ENCODE measurements at regions of chr6 and their contacts with region 1.

Region 1: DNA sequence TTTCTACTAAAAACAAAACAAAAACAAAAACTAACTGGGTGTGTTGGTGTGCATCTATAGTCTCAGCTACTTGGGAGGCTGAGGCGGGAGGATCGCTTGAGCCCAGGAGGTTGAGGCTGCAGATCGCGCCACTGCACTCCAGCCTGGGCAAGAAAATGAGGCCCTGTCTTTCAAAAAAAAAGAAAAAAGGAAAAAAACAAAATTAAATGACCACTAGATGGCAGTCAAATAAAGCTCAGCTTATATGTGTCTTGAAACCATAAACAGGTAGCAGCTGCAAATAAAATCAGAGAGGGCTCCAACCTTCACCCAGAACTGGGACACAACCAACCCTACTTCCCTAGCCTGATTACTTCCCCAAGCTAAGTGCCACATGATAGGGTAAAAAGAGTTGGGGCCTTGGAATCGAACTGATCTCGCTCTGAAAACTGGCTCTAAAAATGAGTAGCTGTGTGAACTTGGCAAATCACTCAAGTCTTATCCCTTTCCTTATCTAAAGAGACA is 67.1 kb upstream of the ADGRF4 start:
- DNase-seq: no peak
- H3K4me3 Mint-ChIP-seq: no peak overlapping the region
- H3K27ac Mint-ChIP-seq: no peak overlapping the region
- H3K4me1 Mint-ChIP-seq: peaks cover 8% of the 10 kb centered on the region
- H3K27me3 Mint-ChIP-seq: peaks cover 8% of the 10 kb centered on the region

Region 2: DNA sequence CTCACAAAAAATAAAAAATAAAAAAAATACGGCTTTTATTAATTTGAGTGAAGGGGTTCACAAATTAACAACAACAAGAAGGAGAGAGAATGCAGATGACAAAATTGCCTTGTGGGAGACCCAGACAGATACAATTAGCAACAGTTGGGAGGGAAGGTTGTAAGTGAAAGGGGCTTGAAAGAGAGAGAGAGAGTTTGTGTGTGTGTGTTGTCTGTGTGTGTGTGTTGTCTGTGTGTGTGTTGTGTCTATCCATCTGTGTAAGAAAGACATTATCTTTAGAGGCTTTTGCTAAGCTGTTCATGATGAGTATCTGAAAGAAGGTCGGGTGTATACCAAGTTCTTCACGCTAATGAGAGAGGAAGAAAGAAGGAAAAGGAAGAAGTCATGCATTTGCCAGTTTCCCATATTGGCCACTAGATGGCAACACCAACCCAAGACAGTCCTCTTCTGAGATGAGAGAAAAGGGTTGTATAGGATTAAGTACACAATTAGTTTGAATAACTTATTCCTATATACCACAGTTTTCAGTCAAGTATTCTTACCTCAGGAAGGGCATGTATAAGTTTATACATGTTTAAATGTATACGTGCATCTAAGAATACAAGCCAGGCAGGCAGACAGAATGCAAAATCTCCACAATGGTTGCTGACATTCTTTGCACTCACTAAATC is 217.4 kb before region 1 on chr6:
- intact Hi-C with region 1: loop called (anchors 1 kb)
- DNase-seq: peak; percentile 9
- H3K4me3 Mint-ChIP-seq: peak overlapping the region; percentile 77
- H3K27ac Mint-ChIP-seq: peak overlapping the region; percentile 62
- H3K4me1 Mint-ChIP-seq: peaks cover 20% of the 10 kb centered on the region
- H3K27me3 Mint-ChIP-seq: peaks cover 19% of the 10 kb centered on the region

Region 3: GRCh38 chr6:47733879-47734558 is 102.7 kb after region 1 on chr6:
- intact Hi-C with region 1: loop called (anchors 1 kb)
- DNase-seq: no peak
- H3K4me3 Mint-ChIP-seq: no peak overlapping the region
- H3K27ac Mint-ChIP-seq: no peak overlapping the region
- H3K4me1 Mint-ChIP-seq: no peaks in the 10 kb centered on the region
- H3K27me3 Mint-ChIP-seq: peaks cover 11% of the 10 kb centered on the region

Region 4: DNA sequence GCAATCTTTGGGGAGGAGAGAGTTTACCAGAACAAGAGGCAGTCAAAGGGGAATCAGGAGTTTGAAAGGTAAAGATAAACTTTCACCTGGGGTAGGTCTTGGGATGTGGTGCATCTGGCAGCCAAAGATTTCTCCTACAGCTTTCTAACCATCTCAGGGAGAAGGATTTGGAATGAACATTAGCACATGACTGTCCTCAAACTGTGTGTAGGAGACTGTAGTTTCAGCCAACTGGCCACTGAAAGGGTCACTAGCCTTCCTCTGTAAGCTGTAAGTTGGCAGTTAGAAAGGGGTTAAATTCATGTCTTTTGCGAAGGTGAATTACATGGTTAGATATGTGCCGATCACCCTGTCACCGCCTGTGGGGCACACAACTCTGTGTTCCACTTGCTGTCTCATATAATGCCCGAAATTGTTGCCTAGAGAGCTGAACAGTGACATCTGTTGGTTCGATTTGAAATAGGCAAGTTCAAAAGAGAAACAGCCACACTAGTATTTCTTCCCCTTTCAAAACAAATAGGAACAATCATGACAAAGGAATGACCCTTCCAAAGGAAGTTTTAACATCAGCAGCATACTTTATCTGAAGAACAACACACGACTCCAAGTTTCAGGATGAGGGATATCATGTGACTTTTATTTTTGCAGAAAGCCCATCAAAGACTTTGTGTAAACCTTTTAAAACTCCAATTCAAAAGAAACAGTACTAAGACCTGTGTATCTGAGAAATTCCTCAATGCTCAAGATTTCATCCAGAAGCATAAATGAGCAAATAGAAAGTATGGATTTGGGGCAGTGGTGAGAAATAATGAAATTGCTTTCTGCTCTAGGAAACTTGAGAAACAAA is 149.4 kb after region 1 on chr6:
- intact Hi-C with region 1: loop called (anchors 1 kb)
- DNase-seq: peak; percentile 13
- H3K4me3 Mint-ChIP-seq: no peak overlapping the region
- H3K27ac Mint-ChIP-seq: no peak overlapping the region
- H3K4me1 Mint-ChIP-seq: no peaks in the 10 kb centered on the region
- H3K27me3 Mint-ChIP-seq: peaks cover 14% of the 10 kb centered on the region

Region 5: DNA sequence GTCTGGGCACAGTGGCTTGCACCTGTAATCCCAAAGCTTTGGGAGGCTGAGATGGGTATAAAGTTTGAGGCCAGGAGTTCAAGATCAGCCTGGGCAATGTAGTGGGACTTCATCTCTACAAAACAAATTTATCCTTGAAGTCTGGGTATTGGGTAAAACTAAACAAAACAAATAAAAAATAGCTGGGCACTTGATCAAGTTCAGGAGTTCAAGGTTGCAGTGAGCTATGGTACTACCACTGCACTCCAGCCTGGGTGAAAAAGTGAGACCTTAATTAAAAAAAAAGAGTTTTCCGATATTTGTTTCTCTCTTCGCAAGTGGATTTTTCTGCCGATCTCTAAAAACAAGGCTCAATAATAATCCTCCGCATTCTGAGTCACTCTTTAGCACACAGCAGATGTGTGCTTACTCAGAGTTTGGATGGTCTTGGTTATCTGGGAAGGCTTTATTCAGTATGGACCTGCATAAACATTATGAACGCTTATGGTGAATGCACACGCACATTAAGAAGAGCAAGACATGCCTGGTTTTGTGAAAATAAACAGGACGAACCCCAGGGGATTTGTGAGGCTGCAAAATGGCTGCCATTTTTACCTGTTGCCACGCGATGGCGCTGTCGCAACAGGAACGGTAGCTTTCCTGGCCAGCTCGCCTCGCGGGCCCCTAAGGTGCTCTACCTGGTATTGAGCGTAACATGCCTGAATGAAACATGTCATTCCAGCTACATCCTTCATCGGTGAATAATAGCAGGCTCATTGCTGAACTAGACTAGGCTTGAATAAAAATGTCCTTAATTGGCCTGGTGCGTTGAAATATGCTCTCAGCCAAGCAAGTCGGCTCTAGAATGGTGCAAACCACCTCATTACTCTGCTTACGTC is 156.5 kb after region 1 on chr6:
- intact Hi-C with region 1: loop called (anchors 2 kb)
- DNase-seq: peak; percentile 28
- H3K4me3 Mint-ChIP-seq: no peak overlapping the region
- H3K27ac Mint-ChIP-seq: no peak overlapping the region
- H3K4me1 Mint-ChIP-seq: peaks cover 6% of the 10 kb centered on the region
- H3K27me3 Mint-ChIP-seq: peaks cover 33% of the 10 kb centered on the region

Region 6: GRCh38 chr6:49409951-49410542 is 1778.7 kb after region 1 on chr6:
- intact Hi-C with region 1: loop called (anchors 5 kb)
- DNase-seq: peak; percentile 21
- H3K4me3 Mint-ChIP-seq: no peak overlapping the region
- H3K27ac Mint-ChIP-seq: no peak overlapping the region
- H3K4me1 Mint-ChIP-seq: no peaks in the 10 kb centered on the region
- H3K27me3 Mint-ChIP-seq: peaks cover 2% of the 10 kb centered on the region